Brain microvascular endothelial cell (primary cell): ENCODE measurements at regions of chr4 and their contacts with region 1.

Region 1: DNA sequence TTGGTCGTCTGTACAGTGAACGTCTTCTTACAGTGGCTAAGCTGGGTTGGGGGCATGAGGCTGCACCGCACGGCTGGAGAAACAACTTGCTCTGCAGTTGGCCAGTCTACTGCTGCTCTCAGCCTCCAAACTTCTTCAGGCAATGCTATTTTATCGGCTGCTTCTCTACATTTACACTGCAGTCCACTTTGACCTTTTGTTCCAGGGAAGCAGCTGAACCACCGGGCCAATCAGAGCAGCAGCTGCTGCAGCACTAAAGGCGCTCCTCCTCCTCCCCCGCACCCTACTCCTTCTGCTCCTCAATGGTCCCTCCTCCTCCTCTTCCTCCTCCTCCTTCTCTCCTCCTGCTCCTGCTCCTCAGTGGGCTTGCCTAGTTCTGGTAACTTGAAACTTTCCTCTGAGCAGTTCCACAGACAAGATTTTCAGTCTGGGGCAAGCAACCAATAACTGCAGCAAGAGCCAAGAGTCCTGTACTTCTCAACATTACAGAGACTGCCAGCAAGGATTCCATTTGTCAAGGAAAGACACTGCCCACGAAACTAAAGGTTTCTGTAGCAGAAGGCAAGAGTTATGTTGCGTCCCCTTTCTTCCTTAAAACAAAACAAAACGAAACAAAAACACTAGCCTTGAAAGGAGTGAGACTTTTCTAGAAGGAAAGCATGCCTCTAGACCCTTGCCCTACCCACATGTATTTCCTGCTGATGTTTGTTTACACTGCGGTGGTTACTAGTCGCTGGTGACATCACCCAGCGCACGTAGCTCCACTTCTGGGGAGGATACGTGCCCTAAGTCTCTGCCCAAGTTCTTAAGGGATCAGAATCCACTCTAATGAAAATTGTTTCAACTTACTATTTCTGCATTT is 125.7 kb upstream of the NAP1L5 start:
- DNase-seq: peak; percentile 97
- H3K4me3 ChIP-seq: peak overlapping the region; percentile 66
- H3K27ac ChIP-seq: peak overlapping the region; percentile 92
- H3K27me3 ChIP-seq: no peaks in the 10 kb centered on the region
- CTCF ChIP-seq: no peak

Region 2: DNA sequence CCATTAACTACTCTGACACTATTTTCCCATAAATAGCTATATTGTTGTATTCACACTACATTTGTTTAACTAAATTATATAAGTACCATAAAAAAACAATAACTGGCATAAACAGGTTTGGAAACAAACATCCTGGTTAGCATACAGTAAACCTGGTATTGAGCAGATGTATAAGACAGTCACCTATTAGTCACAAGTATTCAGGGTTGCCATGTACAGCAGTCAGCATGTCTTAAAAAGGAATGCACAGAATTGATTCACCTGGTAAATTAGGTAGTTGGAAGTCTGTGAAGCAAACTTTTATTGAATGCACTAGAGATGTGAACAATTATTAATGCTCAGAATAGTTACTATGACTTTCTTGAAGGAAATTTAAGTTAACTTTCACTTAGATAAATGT is 95.8 kb after region 1 on chr4:
- in situ Hi-C with region 1: no loop called
- DNase-seq: no peak
- H3K4me3 ChIP-seq: no peak overlapping the region
- H3K27ac ChIP-seq: no peak overlapping the region
- H3K27me3 ChIP-seq: no peaks in the 10 kb centered on the region
- CTCF ChIP-seq: no peak

Region 3: GRCh38 chr4:89024051-89024675 is 200.9 kb after region 1 on chr4:
- in situ Hi-C with region 1: loop called (anchors 25 kb)
- DNase-seq: peak; percentile 73
- H3K4me3 ChIP-seq: no peak overlapping the region
- H3K27ac ChIP-seq: no peak overlapping the region
- H3K27me3 ChIP-seq: no peaks in the 10 kb centered on the region
- CTCF ChIP-seq: peak; percentile 68

Region 4: DNA sequence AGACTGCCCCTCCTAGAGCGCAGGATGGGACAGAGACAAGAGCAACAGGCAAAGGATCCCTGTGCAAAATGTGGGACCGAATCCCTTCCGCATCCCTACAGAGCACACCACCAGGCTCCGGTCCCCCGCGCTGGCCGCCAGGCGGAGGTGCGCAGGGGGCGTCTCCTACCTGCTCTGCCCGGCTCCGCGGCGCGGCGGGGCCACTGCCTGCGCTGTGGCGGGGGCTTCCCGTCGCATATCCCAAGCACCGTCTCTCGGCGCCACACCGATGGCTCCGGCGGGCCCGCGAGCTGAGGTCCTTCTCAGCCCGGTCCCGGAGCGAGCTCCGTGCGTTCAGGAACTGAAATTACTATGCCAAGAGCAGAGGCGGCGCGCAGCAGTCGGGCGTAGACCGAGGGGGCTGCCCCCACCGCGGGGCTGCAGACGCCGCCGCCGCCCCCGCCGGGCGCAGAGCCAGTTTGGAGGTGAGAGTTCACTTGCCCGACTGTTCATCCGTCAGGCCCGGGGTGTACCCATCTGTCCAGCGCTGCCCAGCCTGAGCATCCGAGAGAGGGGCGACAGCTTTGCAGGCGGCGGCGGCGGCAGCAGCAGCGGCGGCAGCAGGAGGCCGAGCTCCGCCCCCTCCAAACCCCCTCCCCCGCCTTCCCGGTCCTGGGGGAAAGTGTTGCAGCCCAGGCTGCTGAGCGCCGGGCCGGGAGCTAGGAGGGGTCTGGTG is 484.3 kb after region 1 on chr4 and contains the start of gene GPRIN3:
- in situ Hi-C with region 1: no loop called
- DNase-seq: peak; percentile 10
- H3K4me3 ChIP-seq: peak within 1 kb of the TSS; percentile 61
- H3K27ac ChIP-seq: no peak within 1 kb of the TSS
- H3K27me3 ChIP-seq: no peaks in the 10 kb centered on the region
- CTCF ChIP-seq: no peak